K562 (cell line): ENCODE measurements at regions of chr16 and their contacts with region 1.

Region 1: GRCh38 chr16:84738255-84739038 is 38.6 kb downstream of the USP10 start:
- DNase-seq: peak; percentile 72 to 90 (median 76)
- ATAC-seq: peak; percentile 93
- H3K4me3 ChIP-seq: no peak overlapping the region
- H3K27ac ChIP-seq: no peak overlapping the region; the same call in 2 of the 3 replicates
- H3K4me1 ChIP-seq: peaks cover 16 to 22% of the 10 kb centered on the region in 2 experiments
- H3K27me3 ChIP-seq: no peaks in the 10 kb centered on the region
- CTCF ChIP-seq: peak; percentile 89 to 96 (median 91)
- EP300 ChIP-seq: no peak
- POLR2A ChIP-seq: no peak
- RAD21 ChIP-seq: peak; percentile 75 to 85

Region 2: DNA sequence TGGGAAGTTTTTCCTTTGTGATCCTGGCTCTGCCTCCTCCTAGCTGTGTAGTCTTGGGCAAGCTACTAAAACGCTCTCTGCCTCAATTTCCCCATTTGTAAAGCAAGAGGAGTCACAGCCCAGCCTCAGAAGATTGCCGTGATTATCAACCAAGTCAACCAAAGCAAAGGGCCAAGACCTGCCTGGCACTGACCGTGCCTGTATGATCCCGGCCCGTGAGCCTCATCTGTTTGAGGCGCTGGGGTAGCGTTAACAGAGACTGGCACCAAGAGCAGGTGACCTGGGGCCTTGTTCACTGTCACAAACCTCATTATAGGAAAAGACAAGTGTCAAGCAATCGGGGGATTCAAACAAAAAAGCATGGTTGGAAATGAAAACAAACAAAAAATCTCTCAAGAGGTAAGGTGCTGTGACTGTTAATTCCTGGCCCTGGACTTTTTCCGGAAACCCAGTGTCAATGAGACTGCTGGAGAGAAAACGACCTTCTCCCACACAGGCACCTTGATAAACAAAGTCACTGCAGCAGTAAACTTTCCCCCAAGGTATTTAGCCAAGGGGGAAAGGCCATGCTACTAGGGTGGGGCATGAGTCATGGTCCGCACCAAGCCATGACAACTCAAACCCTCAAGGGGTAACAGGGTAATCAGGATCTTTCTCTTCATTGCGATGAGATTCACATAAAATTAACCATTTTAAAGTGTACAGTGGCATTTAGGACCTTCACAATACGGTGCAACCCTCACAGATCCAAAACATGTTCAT is 239.4 kb before region 1 on chr16:
- CTCF ChIA-PET with region 1: no interaction called
- POLR2A ChIA-PET with region 1: no interaction called
- in situ Hi-C with region 1: no loop called
- intact Hi-C with region 1: no loop called
- DNase-seq: no peak
- ATAC-seq: no peak
- H3K4me3 ChIP-seq: no peak overlapping the region
- H3K27ac ChIP-seq: no peak overlapping the region
- H3K4me1 ChIP-seq: peaks cover 11 to 12% of the 10 kb centered on the region in 2 experiments; a peak in 4 of 5 replicates
- H3K27me3 ChIP-seq: no peaks in the 10 kb centered on the region
- CTCF ChIP-seq: no peak
- EP300 ChIP-seq: no peak
- POLR2A ChIP-seq: no peak
- RAD21 ChIP-seq: no peak

Region 3: DNA sequence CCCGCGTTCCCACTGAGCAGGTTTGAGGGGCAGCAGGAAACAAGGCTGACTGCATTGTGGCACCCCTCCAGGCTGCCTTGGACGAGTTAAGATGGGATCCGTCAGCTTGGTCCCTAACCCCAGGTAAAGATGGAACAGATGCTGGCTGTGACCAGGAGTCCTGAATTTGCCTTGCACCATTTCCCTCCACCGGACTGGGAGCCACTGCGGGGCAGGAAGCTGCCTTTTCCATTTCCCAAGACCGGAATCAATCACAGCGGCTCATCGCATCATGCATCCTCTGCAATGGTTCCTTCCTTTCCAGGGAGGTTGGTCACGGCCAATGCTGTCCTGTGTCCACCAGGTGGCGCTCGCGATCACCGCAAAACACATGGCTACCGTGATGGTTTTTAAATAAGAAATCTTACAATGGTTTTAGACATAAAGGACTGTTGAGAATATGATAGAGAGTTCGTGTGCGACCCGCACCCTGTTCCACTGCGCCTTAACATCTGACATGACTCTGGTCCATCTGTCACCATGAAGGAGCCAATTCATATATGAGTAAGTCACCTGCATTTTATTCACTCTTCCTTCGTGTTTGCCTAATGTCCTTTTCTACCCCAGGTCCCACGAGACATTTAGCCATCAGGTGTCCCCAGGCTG is 227.1 kb before region 1 on chr16:
- CTCF ChIA-PET with region 1: interaction called, 10 read pairs
- POLR2A ChIA-PET with region 1: no interaction called
- in situ Hi-C with region 1: no loop called
- intact Hi-C with region 1: no loop called
- DNase-seq: peak; percentile 76 to 88 (median 80)
- ATAC-seq: peak; percentile 88
- H3K4me3 ChIP-seq: no peak overlapping the region
- H3K27ac ChIP-seq: no peak overlapping the region
- H3K4me1 ChIP-seq: peaks cover 7 to 16% of the 10 kb centered on the region in 2 experiments; a peak in 4 of 5 replicates
- H3K27me3 ChIP-seq: peaks cover 0 to 7% of the 10 kb centered on the region in 2 experiments; a peak in 1 of 5 replicates
- CTCF ChIP-seq: peak; percentile 89 to 99 (median 93)
- EP300 ChIP-seq: no peak
- POLR2A ChIP-seq: no peak
- RAD21 ChIP-seq: peak; percentile 97 to 99

Region 4: GRCh38 chr16:84629580-84629979 is 108.9 kb before region 1 on chr16:
- CTCF ChIA-PET with region 1: interaction called, 89 read pairs
- POLR2A ChIA-PET with region 1: interaction called, 5 read pairs
- in situ Hi-C with region 1: no loop called
- intact Hi-C with region 1: no loop called
- DNase-seq: no peak
- ATAC-seq: peak; percentile 44
- H3K4me3 ChIP-seq: no peak overlapping the region
- H3K27ac ChIP-seq: no peak overlapping the region
- H3K4me1 ChIP-seq: peaks cover 0 to 6% of the 10 kb centered on the region in 2 experiments; a peak in 1 of 5 replicates
- H3K27me3 ChIP-seq: peaks cover 8 to 10% of the 10 kb centered on the region in 2 experiments; a peak in 2 of 5 replicates
- CTCF ChIP-seq: no peak
- EP300 ChIP-seq: no peak
- POLR2A ChIP-seq: no peak
- RAD21 ChIP-seq: no peak

Region 5: GRCh38 chr16:84672276-84673202 is 65.9 kb before region 1 on chr16:
- CTCF ChIA-PET with region 1: interaction called, 5 read pairs
- POLR2A ChIA-PET with region 1: interaction called, 3 read pairs
- in situ Hi-C with region 1: no loop called
- intact Hi-C with region 1: loop called (anchors 1 kb)
- DNase-seq: peak; percentile 87 to 91 (median 89)
- ATAC-seq: peak; percentile 95
- H3K4me3 ChIP-seq: no peak overlapping the region
- H3K27ac ChIP-seq: no peak overlapping the region
- H3K4me1 ChIP-seq: peaks cover 10 to 15% of the 10 kb centered on the region in 2 experiments; a peak in 4 of 5 replicates
- H3K27me3 ChIP-seq: peaks cover 0 to 15% of the 10 kb centered on the region in 2 experiments; a peak in 3 of 5 replicates
- CTCF ChIP-seq: peak; percentile 93 to 97 (median 97)
- EP300 ChIP-seq: no peak
- POLR2A ChIP-seq: no peak
- RAD21 ChIP-seq: peak; percentile 81 to 93